Ascending aorta (tissue), 2 donors: ENCODE measurements at regions of chr10 and their contacts with region 1.

Region 1: DNA sequence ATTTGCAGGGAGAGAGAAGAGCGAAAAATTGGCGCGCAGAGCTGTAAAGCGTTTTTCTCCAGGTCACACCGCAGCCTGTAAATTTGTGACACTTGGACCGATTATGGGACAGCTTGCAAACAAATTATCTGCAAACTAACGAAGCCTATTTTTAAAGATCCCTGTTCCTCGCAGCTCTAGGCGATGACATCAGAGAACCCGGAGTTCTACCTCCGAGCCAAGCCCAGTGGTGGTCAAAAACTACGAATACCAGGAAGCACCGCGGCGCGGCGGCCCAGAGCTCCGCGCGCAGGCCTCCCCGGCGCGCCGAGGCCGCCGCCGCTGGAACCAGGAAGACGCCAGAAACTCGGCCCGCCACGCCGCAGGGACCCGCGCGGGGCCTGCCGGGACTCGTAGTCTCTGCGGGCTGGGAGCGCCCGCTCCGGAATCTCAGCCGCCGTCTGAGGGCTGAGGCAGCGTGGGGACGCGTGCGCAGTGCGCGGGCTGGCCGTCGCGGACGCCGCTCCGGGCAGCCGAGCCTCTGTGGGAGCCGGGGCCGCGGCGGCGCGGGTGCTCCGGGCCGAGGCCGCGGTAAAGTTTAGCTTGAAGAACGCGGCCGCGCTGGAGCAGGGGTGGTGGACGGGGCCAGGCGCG is at the start of gene PLEKHA1:
- DNase-seq: peak; percentile 83 to 98
- H3K4me3 ChIP-seq: peak within 1 kb of the TSS; percentile 78 to 95
- H3K27ac ChIP-seq: peak within 1 kb of the TSS; percentile 88 to 99
- H3K4me1 ChIP-seq: peaks cover 0 to 20% of the 10 kb centered on the region in 2 donors
- H3K27me3 ChIP-seq: no peaks in the 10 kb centered on the region
- CTCF ChIP-seq: no peak
- total RNA-seq, gene PLEKHA1: 128 TPM

Region 2: GRCh38 chr10:122142641-122143237 is 231.6 kb before region 1 on chr10:
- intact Hi-C with region 1: loop called (anchors 10 kb)
- DNase-seq: no peak
- H3K4me3 ChIP-seq: no peak overlapping the region
- H3K27ac ChIP-seq: peak overlapping the region; percentile 93 to 95
- H3K4me1 ChIP-seq: peaks cover 28 to 41% of the 10 kb centered on the region in 2 donors
- H3K27me3 ChIP-seq: no peaks in the 10 kb centered on the region
- CTCF ChIP-seq: peak; percentile 82 to 98 (median 89)

Region 3: DNA sequence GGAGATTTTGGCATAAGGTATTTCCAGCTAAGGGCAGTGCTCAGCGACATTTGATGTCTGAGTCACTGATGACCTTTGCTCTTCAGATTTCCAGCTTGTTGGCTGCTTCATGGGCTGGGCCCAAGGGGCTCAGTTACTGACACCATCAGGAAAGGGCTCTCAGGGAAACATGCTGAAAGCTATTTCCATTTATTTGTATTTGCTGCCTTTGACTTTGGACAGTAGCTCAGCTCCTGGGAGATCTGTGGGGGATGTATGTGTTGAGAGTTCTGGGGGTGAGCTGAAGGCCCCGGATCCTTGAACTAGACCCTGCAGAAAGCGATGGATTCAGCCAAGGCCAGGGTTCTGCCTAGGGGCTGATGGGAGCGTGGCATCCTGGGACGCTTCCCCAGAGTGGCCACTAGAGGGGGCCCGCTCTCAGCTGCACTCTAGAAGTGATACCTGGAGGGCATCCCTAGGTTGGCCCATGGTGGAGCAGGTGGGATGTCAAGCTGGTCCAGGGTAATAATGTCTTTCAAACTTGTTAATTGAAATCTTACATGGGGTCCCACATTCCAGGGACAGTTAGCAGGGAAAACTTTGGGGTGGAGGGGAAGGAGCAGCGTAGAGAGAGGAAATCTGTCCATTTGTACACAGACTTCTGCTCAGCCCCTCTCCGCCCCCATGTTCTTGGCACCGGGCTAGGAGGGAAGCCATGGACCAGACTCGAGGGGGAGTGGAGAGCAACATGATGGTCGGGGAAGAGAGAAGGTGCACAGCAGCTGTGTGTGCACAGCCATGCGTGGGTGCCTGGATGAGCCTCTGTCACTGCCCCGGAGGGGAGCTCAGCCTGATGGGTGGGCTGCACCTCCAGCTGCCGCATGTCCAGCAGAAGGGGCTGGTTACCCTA is 106.3 kb before region 1 on chr10:
- intact Hi-C with region 1: no loop called
- DNase-seq: no peak
- H3K4me3 ChIP-seq: no peak overlapping the region
- H3K27ac ChIP-seq: no peak overlapping the region
- H3K4me1 ChIP-seq: no peaks in the 10 kb centered on the region
- H3K27me3 ChIP-seq: no peaks in the 10 kb centered on the region
- CTCF ChIP-seq: peak; percentile 55 to 91 (median 89)

Region 4: GRCh38 chr10:122286867-122287266 is 87.5 kb before region 1 on chr10:
- intact Hi-C with region 1: loop called (anchors 5 kb)
- DNase-seq: peak; percentile 74 to 89
- H3K4me3 ChIP-seq: no peak overlapping the region
- H3K27ac ChIP-seq: peak overlapping the region; percentile 67 to 73
- H3K4me1 ChIP-seq: peaks cover 6 to 15% of the 10 kb centered on the region in 2 donors
- H3K27me3 ChIP-seq: no peaks in the 10 kb centered on the region
- CTCF ChIP-seq: no peak

Region 5: DNA sequence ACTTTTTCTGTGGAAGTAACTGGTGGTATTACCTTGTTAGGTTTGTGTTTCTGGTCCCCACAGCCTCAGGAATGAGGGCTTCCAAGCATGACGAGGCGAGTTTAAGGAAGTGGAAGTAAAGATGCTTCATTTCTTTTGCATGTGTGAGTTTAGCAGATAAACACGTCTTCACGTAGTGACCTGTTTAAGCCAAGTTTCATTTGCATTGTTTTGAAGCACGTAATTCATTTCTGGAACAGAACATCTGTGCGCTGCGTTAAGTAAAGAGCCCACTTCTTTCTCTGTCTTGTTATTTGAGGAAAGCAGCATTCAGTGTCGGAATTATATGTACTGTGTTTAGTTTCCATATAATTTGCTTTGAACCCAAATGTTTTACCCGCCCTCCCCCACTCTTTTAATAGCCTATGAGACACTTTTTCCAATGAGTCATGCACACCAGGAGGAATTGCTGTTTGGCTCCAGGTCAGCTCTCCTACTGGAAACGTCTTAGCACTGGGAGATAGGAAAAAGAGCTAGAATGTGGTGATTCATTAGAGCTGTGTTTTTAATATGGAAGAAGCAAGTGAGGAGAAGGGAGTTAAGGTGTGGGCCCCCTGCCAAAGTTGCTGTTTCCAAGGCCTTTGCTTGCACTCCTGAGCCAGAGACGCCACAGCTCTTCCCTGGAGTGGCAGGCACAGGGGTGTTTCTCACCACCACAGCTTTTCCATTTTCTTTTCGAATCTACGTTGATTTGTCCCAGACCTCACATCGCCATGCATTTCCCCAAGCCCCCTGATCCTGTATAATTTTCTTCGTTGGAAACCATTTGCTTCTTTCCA is 66.5 kb before region 1 on chr10:
- intact Hi-C with region 1: loop called (anchors 2 kb)
- DNase-seq: peak; percentile 25 to 95
- H3K4me3 ChIP-seq: peak overlapping the region; percentile 4 to 40
- H3K27ac ChIP-seq: peak overlapping the region; percentile 92 to 93
- H3K4me1 ChIP-seq: peaks cover 10 to 14% of the 10 kb centered on the region in 2 donors
- H3K27me3 ChIP-seq: no peaks in the 10 kb centered on the region
- CTCF ChIP-seq: no peak

Region 6: DNA sequence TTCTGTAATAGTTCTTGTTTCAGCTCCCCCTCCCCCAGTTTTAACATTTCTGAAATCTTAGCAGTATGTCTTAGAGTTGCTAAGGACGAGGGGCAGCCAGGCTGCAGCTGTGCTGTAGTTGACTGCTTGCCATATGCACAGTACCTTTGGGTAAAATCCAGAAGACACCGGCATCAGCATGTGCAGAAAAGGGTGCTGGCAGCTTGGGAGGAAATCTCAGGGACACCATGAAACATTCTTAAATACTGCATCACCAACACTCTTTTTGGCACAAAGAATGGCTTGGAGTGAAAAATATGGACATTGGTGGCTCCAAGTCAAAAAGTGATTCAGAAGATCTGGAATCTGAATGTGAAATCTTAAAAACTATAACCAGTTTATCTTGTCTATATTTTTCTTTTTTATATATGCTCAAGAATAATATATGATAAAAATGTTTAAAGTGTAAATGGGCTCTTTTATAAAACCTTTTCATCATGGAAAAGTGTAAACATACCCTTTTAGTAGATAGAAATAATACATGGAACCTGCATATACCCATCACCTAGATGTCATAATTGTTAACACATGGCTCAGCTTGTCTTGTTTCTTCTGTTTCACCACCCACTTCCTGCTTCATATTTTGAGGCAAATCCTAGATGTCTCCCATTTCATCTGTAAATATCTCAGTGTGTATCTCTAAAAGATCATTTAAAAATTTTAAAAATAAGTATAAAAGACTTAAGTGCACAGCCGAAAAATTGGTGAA is 45.7 kb after region 1 on chr10:
- intact Hi-C with region 1: loop called (anchors 5 kb)
- DNase-seq: peak in 1 of 2 donors; percentile 69
- H3K4me3 ChIP-seq: no peak overlapping the region
- H3K27ac ChIP-seq: no peak overlapping the region
- H3K4me1 ChIP-seq: peaks cover 0 to 5% of the 10 kb centered on the region in 2 donors
- H3K27me3 ChIP-seq: no peaks in the 10 kb centered on the region
- CTCF ChIP-seq: no peak

Region 7: GRCh38 chr10:122894261-122894944 is 520.0 kb after region 1 on chr10:
- intact Hi-C with region 1: no loop called
- DNase-seq: no peak
- H3K4me3 ChIP-seq: no peak overlapping the region
- H3K27ac ChIP-seq: no peak overlapping the region
- H3K4me1 ChIP-seq: no peaks in the 10 kb centered on the region
- H3K27me3 ChIP-seq: no peaks in the 10 kb centered on the region
- CTCF ChIP-seq: no peak

Region 8: DNA sequence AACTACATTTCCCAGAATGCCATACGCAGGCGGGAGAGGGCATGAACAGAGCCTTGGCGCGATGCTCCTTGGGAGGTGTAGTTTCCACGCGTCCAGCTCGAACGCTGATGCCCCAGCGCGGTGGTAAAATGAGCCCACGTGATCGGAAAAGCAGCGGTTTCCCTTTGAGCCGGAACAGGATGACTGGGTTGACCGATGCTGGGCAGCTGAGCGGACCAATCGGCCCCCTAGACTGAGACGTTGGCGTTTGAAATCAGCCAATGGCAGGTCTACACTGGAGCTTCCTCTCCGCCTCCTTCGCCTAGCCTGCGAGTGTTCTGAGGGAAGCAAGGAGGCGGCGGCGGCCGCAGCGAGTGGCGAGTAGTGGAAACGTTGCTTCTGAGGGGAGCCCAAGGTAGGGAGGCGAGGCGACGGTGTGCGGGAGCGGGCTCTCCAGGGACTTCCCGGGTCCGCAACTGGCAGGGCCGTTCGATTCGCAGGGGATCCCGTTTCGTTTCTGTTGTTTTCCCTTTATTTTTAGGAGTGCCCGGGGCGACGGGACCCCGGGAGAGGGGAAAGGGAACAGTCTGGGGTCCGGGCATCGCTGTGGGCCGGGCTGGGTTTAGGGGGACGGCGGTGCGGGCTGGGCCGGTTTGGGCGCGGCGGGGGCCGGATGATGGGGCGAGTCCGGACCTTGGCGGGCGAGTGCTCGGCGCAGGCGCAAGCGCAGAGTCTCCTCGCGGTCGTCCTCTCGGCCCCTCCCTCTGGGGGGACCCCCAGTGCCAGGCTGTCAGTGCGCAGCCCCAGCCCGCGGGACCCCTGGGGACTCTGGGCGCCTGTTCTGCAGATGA is 780.0 kb after region 1 on chr10 and contains the start of gene BUB3:
- intact Hi-C with region 1: loop called (anchors 1 kb)
- DNase-seq: peak; percentile 95 to 99
- H3K4me3 ChIP-seq: peak within 1 kb of the TSS; percentile 74 to 92
- H3K27ac ChIP-seq: peak within 1 kb of the TSS; percentile 75 to 90
- H3K4me1 ChIP-seq: peaks cover 8 to 19% of the 10 kb centered on the region in 2 donors
- H3K27me3 ChIP-seq: peaks cover 16% of the 10 kb centered on the region
- CTCF ChIP-seq: peak in 2 of 3 experiments; percentile 5 to 30
- total RNA-seq, gene BUB3: 12.2 TPM